Activated CD8-positive, alpha-beta T cell treated with anti-CD3 and anti-CD28 coated beads for 36 hours (primary cell): ENCODE measurements at regions of chr1 and their contacts with region 1.

Region 1: GRCh38 chr1:40951943-40952743 is 27.4 kb upstream of the CTPS1 start:
- DNase-seq: peak; percentile 68
- ATAC-seq: peak; percentile 67
- H3K4me3 Mint-ChIP-seq: no peak overlapping the region
- H3K27ac Mint-ChIP-seq: no peak overlapping the region
- H3K4me1 Mint-ChIP-seq: peaks cover 7% of the 10 kb centered on the region
- H3K27me3 Mint-ChIP-seq: peaks cover 15% of the 10 kb centered on the region
- CTCF ChIP-seq: peak; percentile 99

Region 2: GRCh38 chr1:40612345-40612831 is 339.8 kb before region 1 on chr1:
- CTCF ChIA-PET with region 1: interaction called, 6 read pairs
- POLR2A ChIA-PET with region 1: no interaction called
- intact Hi-C with region 1: loop called (anchors 5 kb)
- DNase-seq: peak; percentile 82
- ATAC-seq: peak; percentile 97
- H3K4me3 Mint-ChIP-seq: no peak overlapping the region
- H3K27ac Mint-ChIP-seq: no peak overlapping the region
- H3K4me1 Mint-ChIP-seq: no peaks in the 10 kb centered on the region
- H3K27me3 Mint-ChIP-seq: no peaks in the 10 kb centered on the region
- CTCF ChIP-seq: peak; percentile 86

Region 3: DNA sequence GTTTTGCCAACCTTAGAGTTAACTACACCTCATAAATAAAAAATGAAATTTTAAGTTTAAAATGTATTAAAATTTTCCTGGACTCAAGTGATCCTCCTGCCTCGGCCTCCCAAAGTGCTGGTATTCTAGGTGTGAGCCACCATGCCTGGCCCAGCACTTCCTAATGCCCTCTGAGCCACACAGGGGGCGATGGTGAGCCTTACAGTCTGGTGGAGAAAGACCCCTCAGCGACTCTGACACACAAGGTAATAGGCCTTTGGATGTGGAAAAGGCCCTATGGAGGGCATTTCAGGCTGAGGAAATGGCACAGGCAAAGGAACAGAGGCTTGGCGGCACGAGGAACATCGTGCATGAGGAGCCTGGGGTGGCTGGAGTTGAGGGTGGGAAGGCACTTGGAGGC is 96.6 kb before region 1 on chr1:
- CTCF ChIA-PET with region 1: interaction called, 73 read pairs
- POLR2A ChIA-PET with region 1: interaction called, 3 read pairs
- intact Hi-C with region 1: loop called (anchors 5 kb)
- DNase-seq: peak; percentile 63
- ATAC-seq: peak; percentile 58
- H3K4me3 Mint-ChIP-seq: no peak overlapping the region
- H3K27ac Mint-ChIP-seq: no peak overlapping the region
- H3K4me1 Mint-ChIP-seq: no peaks in the 10 kb centered on the region
- H3K27me3 Mint-ChIP-seq: no peaks in the 10 kb centered on the region
- CTCF ChIP-seq: peak; percentile 53

Region 4: GRCh38 chr1:40876891-40877290 is 75.3 kb before region 1 on chr1:
- CTCF ChIA-PET with region 1: interaction called, 14 read pairs
- POLR2A ChIA-PET with region 1: interaction called, 3 read pairs
- intact Hi-C with region 1: no loop called
- DNase-seq: no peak
- ATAC-seq: no peak
- H3K4me3 Mint-ChIP-seq: no peak overlapping the region
- H3K27ac Mint-ChIP-seq: peak overlapping the region; percentile 34
- H3K4me1 Mint-ChIP-seq: peaks cover 33% of the 10 kb centered on the region
- H3K27me3 Mint-ChIP-seq: peaks cover 1% of the 10 kb centered on the region
- CTCF ChIP-seq: no peak

Region 5: GRCh38 chr1:40898431-40898901 is 53.7 kb before region 1 on chr1:
- CTCF ChIA-PET with region 1: no interaction called
- POLR2A ChIA-PET with region 1: no interaction called
- intact Hi-C with region 1: no loop called
- DNase-seq: peak; percentile 55
- ATAC-seq: peak; percentile 48
- H3K4me3 Mint-ChIP-seq: no peak overlapping the region
- H3K27ac Mint-ChIP-seq: no peak overlapping the region
- H3K4me1 Mint-ChIP-seq: peaks cover 12% of the 10 kb centered on the region
- H3K27me3 Mint-ChIP-seq: no peaks in the 10 kb centered on the region
- CTCF ChIP-seq: no peak

Region 6: GRCh38 chr1:40939320-40940059 is 12.7 kb before region 1 on chr1:
- CTCF ChIA-PET with region 1: interaction called, 105 read pairs
- POLR2A ChIA-PET with region 1: no interaction called
- intact Hi-C with region 1: no loop called
- DNase-seq: no peak
- ATAC-seq: no peak
- H3K4me3 Mint-ChIP-seq: no peak overlapping the region
- H3K27ac Mint-ChIP-seq: no peak overlapping the region
- H3K4me1 Mint-ChIP-seq: no peaks in the 10 kb centered on the region
- H3K27me3 Mint-ChIP-seq: peaks cover 2% of the 10 kb centered on the region
- CTCF ChIP-seq: no peak

Region 7: GRCh38 chr1:40979233-40980067 is 27.3 kb after region 1 on chr1 and contains the start of gene CTPS1:
- CTCF ChIA-PET with region 1: interaction called, 10 read pairs
- POLR2A ChIA-PET with region 1: interaction called, 7 read pairs
- intact Hi-C with region 1: no loop called
- DNase-seq: peak; percentile 96
- ATAC-seq: peak; percentile 88
- H3K4me3 Mint-ChIP-seq: peak within 1 kb of the TSS; percentile 91
- H3K27ac Mint-ChIP-seq: peak within 1 kb of the TSS; percentile 95
- H3K4me1 Mint-ChIP-seq: peaks cover 47% of the 10 kb centered on the region
- H3K27me3 Mint-ChIP-seq: no peaks in the 10 kb centered on the region
- CTCF ChIP-seq: peak; percentile 50
- total RNA-seq, gene CTPS1: 100 to 102 TPM

Region 8: DNA sequence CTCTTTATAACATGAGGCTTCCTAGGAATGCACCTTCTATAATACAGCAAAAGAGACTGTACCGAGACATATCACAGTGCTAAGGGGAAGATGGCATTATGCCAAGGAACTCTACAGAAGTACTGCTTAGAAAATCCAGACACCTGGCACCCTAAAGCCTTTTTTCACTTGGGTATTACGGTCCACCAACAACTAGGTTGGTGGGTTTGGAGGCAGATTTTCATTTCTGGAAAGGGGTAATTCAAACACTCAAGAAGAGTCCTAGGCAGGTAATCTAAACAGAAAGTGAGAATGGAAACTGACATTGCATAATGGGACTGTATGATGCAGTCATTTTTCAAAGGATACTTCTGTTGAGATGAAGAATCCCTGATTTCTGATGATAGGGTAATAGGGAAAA is 270.4 kb after region 1 on chr1:
- CTCF ChIA-PET with region 1: no interaction called
- POLR2A ChIA-PET with region 1: no interaction called
- intact Hi-C with region 1: no loop called
- DNase-seq: no peak
- ATAC-seq: no peak
- H3K4me3 Mint-ChIP-seq: no peak overlapping the region
- H3K27ac Mint-ChIP-seq: no peak overlapping the region
- H3K4me1 Mint-ChIP-seq: peaks cover 16% of the 10 kb centered on the region
- H3K27me3 Mint-ChIP-seq: no peaks in the 10 kb centered on the region
- CTCF ChIP-seq: no peak